H1 (cell line): ENCODE measurements at regions of chr11 and their contacts with region 1.

Region 1: DNA sequence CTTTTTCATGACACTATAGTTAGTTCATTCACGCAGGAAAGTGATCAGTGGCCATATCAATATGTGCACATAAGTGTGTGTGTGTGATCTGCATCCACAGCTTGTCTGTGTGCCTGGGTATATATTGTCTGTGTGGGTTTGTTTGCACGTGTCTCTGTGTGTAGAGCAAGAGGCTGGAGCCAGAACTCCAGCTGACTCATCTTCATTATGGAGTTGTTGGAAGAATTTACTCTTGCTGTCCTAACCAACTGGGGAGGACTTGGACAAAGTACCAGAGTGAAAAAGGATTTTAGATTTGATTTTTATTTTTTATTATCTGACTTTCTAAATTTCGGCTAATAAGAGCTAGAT is 63.9 kb downstream of the TP53I11 start:
- DNase-seq: no peak
- H3K4me3 ChIP-seq: no peak overlapping the region
- H3K27ac ChIP-seq: no peak overlapping the region
- H3K4me1 ChIP-seq: peaks cover 14 to 31% (median 21%) of the 10 kb centered on the region in 4 experiments
- H3K27me3 ChIP-seq: peaks cover 0 to under 1% (median under 1%) of the 10 kb centered on the region in 4 experiments; a peak in 3 of 7 replicates
- CTCF ChIP-seq: no peak
- EP300 ChIP-seq: no peak
- POLR2A ChIP-seq: no peak
- RAD21 ChIP-seq: no peak

Region 2: GRCh38 chr11:44785856-44786606 is 100.7 kb before region 1 on chr11:
- CTCF ChIA-PET with region 1: interaction called, 12 read pairs
- POLR2A ChIA-PET with region 1: no interaction called
- DNase-seq: no peak
- H3K4me3 ChIP-seq: peak overlapping the region in 1 of 4 experiments; percentile 9; a peak in 1 of 8 replicates
- H3K27ac ChIP-seq: no peak overlapping the region
- H3K4me1 ChIP-seq: peaks cover 8 to 19% (median 19%) of the 10 kb centered on the region in 4 experiments
- H3K27me3 ChIP-seq: peaks cover 0 to 4% (median 0%) of the 10 kb centered on the region in 4 experiments; a peak in 1 of 7 replicates
- CTCF ChIP-seq: peak; percentile 51 to 62 (median 58)
- EP300 ChIP-seq: no peak
- POLR2A ChIP-seq: no peak
- RAD21 ChIP-seq: peak; percentile 24 to 54; a peak in 3 of 4 replicates

Region 3: DNA sequence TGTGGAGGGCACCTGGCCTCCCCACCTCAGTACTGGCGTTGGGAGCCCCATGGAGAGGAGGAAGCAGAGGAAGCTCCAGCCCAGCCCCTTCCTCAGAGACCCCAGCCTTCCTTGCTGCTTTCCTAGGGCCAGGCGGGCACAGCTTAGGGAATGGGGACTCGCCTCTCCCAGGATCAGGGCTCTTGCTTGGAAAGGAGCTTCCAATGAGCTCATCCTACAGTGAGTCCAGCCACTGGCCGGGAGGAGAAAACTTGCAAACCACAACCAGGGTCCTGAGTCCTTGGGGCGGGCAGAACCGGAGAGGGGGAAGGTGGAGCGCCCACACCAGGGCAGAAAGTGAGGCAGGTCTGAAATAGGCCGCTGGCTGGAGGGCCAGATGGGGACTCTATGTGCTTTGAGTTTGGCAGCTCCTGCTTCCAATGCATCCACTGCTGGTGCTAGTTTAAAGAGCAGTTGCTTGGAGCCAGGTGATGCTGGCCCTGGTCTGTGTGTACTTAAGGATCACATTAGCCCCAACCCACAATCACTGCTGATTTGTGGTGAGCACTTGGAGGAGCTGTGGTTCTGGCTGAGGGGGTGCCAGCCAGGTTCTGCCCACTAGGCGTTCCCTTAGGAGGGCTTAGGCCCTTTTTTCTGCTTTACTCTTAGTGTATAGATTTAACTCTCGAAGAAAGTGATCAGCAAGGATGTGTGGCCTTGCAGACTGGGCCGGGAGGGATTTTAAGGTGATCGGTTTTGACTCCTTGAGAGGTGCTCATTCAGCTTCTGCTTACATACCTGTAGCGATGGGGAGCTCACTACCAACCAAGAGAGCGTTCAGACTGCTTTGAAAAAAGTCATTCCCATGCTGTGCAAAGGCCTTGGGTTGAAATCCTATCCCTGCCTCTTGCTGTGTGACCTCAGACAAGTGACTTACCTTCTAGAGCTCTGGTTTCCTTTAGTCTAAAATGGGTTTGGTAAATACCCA is 18.0 kb before region 1 on chr11:
- CTCF ChIA-PET with region 1: interaction called, 26 read pairs
- POLR2A ChIA-PET with region 1: interaction called, 3 read pairs
- DNase-seq: no peak
- H3K4me3 ChIP-seq: no peak overlapping the region
- H3K27ac ChIP-seq: no peak overlapping the region
- H3K4me1 ChIP-seq: peaks cover 0 to 15% (median 7%) of the 10 kb centered on the region in 4 experiments; a peak in 6 of 7 replicates
- H3K27me3 ChIP-seq: no peaks in the 10 kb centered on the region
- CTCF ChIP-seq: no peak
- EP300 ChIP-seq: no peak
- POLR2A ChIP-seq: no peak
- RAD21 ChIP-seq: no peak

Region 4: DNA sequence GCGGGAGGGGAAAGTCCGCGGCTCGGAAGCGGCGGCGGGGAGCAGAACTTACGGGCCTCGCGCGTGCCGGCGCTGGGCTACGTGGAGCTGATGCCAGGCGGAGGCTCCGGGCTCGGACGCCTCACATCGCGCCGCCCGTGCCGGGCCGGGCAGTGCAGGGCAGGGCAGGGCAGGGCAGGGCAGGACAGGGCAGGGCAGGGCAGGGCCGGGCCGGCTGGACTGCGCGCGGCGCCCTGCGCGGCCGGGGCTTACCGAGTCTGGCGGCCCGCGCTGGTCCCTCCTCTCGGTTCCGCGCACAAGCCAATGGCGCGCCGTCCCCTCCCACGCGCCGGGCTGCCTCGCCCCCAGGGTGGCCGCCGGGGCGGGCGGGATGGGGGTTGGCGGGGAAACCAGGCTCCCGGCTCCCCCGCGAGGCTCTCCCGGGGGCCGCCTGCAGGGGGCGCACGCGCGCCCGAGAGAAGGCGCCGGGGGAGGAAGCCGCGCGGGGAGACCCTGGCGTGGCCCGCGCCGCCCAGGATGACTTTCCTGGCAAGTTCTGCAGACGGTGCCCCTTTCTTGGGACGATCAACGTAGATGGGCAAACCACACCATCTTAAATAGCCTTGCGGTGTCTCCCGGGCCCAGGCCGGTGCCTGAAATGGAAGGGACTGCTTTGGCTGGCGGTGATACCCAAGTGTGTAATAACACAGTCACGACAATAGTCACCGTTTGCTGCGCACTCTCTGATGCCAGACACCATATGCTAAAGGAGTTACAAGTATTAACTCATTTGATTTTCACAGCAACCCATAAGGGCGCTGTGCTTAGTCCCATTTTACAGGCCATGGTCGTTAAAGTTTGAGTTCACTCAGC is 64.1 kb after region 1 on chr11 and contains the start of gene TP53I11:
- CTCF ChIA-PET with region 1: no interaction called
- POLR2A ChIA-PET with region 1: no interaction called
- DNase-seq: no peak
- H3K4me3 ChIP-seq: peak within 1 kb of the TSS; percentile 64 to 78 (median 70)
- H3K27ac ChIP-seq: peak within 1 kb of the TSS; percentile 21; the same call in 1 of the 2 replicates
- H3K4me1 ChIP-seq: peaks cover 12 to 51% (median 31%) of the 10 kb centered on the region in 4 experiments
- H3K27me3 ChIP-seq: no peaks in the 10 kb centered on the region; a peak in 1 of 7 replicates
- CTCF ChIP-seq: peak in 2 of 3 experiments; percentile 33 to 70; a peak in 3 of 4 replicates
- EP300 ChIP-seq: no peak
- POLR2A ChIP-seq: no peak
- RAD21 ChIP-seq: peak; percentile 28 to 57; a peak in 3 of 4 replicates
- total RNA-seq, gene TP53I11: 46.3 and 53.7 TPM in 2 replicates

Region 5: GRCh38 chr11:44979543-44980399 is 93.0 kb after region 1 on chr11:
- CTCF ChIA-PET with region 1: no interaction called
- POLR2A ChIA-PET with region 1: no interaction called
- DNase-seq: no peak
- H3K4me3 ChIP-seq: no peak overlapping the region
- H3K27ac ChIP-seq: 0 out of 2 replicates have a peak overlapping the region, but pooled peaks have one; percentile 8
- H3K4me1 ChIP-seq: peaks cover 0 to 27% (median 15%) of the 10 kb centered on the region in 4 experiments; a peak in 6 of 7 replicates
- H3K27me3 ChIP-seq: no peaks in the 10 kb centered on the region
- CTCF ChIP-seq: no peak
- EP300 ChIP-seq: no peak
- POLR2A ChIP-seq: no peak
- RAD21 ChIP-seq: no peak